ENCODE measurements at regions of chr6 and their contacts with region 1.

Region 1: GRCh38 chr6:90780778-90781177 is 193.9 kb upstream of the MAP3K7 start:
- DNase-seq: no peak
- H3K4me3 ChIP-seq: no peak overlapping the region
- H3K27ac ChIP-seq: no peak overlapping the region
- H3K4me1 ChIP-seq: no peaks in the 10 kb centered on the region
- H3K27me3 ChIP-seq: no peaks in the 10 kb centered on the region
- CTCF ChIP-seq: no peak
- EP300 ChIP-seq: no peak
- POLR2A ChIP-seq: no peak

Region 2: DNA sequence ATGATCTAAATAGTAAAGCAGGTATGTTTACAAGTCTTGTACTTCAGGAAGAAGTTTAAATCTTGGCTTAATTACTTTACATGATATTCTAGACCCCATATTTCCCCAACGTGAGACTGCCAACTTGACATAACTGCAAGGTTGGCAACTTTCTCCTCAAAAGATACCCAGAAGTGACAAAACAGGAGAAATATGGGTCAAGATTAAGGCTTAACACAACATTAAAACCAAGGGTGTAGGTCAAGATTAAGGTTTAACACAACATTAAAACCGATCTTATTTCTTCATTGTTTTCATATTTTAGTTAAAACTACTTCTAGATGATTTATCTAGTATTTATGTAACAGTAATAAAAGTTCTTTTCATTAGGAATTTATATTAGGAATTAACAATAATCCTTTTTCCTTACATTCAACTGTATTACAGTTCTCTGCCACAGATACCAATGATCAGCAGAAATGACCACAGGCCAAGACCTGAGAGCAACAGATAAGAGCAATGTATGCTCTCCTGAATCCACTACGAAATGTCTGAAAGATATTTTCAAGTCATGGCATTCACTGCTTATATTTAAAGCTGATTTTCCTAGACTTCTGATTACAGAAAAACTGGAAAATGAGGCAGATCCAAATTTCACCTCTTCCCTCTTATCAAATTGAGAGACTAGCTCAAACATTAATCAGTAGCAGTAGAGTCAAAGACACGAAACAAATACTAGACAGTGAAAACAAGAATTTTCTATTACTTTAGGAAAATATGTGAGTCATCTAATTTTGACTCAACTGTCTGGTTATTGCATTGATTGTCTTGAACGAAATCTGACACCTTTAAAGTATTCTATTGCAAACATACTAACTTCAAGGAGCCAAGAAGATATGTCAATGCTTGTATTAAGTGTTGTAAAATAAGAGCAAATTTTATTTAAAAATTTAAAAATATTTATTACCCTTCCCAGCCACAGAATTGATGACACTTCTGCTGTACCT is 1889.6 kb before region 1 on chr6:
- in situ Hi-C with region 1: no loop called
- intact Hi-C with region 1: no loop called
- DNase-seq: no peak
- H3K4me3 ChIP-seq: no peak overlapping the region
- H3K27ac ChIP-seq: no peak overlapping the region
- H3K4me1 ChIP-seq: no peaks in the 10 kb centered on the region
- H3K27me3 ChIP-seq: no peaks in the 10 kb centered on the region
- CTCF ChIP-seq: no peak
- EP300 ChIP-seq: no peak
- POLR2A ChIP-seq: no peak

Region 3: DNA sequence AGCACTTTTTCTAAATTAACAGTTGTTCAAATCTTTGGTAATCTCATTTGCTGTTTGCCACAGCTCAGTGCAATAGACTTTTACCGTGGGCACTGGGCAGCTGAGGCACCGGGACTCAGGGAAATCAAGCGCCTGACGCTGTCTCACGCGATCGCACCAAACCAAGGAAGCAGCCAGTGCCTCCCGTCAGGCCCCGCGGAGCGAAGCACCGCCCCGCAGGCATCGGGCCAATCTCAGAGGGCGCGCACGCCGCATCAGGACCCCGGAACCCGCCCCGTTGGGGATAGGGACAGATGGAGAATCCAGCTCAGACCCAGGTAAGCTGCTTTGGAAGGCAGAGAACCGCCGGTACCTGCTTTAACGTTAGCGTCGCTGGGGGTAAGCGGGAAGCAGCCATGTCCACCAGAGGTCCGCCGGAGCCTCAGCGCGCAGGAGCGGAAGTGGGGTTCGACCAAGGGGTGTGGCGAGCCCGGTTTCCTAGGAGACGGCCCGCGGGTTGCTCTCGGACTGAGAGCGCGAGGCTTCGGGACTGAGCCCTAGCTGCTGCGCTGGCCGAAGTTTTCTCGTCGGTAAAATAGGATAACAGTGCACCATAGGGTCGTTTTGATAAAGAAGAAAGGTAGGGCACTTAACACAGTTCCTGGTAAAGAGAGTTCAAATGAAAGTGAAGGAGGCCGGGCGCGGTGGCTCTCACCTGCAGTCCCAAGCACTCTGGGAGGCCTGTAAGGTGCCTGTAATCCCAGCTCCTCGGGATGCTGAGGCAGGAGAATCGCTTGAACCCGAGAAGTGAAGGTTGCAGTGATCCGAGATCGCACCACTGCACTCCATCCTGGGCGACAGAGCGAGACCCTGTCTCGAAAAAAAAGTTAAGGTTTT is 1142.2 kb before region 1 on chr6 and contains the start of gene LYRM2:
- in situ Hi-C with region 1: no loop called
- intact Hi-C with region 1: no loop called
- DNase-seq: peak; percentile 95
- H3K4me3 ChIP-seq: peak within 1 kb of the TSS; percentile 44 to 84 (median 62)
- H3K27ac ChIP-seq: peak within 1 kb of the TSS; percentile 88 to 95 (median 91)
- H3K4me1 ChIP-seq: peaks cover 7 to 33% (median 22%) of the 10 kb centered on the region in 4 donors
- H3K27me3 ChIP-seq: no peaks in the 10 kb centered on the region
- CTCF ChIP-seq: peak in 2 of 5 experiments; percentile 19 to 41
- EP300 ChIP-seq: no peak
- POLR2A ChIP-seq: peak; percentile 96
- total RNA-seq, gene LYRM2: 7.1 to 17.8 (median 16.4) TPM

Region 4: DNA sequence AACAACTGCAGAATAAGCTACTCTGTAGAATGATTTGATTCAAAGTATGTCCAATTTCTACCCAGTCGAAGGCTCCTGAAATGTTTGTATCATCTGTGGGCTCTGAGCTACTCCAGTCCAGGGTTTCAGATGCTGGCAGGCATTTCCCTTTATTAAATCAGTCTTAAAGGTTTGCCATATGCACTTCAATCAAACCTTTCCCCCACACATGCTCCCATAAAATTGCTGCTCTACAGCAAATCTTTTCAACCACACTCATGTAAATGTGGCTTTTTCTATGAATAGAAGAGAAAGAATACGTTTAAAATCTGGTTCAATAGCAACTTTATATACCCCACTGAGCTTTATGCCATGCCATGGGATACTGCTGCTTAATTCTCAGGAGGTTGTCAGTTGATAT is 48.5 kb after region 1 on chr6:
- in situ Hi-C with region 1: no loop called
- intact Hi-C with region 1: loop called (anchors 1 kb)
- DNase-seq: no peak
- H3K4me3 ChIP-seq: no peak overlapping the region
- H3K27ac ChIP-seq: no peak overlapping the region
- H3K4me1 ChIP-seq: no peaks in the 10 kb centered on the region
- H3K27me3 ChIP-seq: no peaks in the 10 kb centered on the region
- CTCF ChIP-seq: no peak
- EP300 ChIP-seq: no peak
- POLR2A ChIP-seq: no peak

Region 5: DNA sequence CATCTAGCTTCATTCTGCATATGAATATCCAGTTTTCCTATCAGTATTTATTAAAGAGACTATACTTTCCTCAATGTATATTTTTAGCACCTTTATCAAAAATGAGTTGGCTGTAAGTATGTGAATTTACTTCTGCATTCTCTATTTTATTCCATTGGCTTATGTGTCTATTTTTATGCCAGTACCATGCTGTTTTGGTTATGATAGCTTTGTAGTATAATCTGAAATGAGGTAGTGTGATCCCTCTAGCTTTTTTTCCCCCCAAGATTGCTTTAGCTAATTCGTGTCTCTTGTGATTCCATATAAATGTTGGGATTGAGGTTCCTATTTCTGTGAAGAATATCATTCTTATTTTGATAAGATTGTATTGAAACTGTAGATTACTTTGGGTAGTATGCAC is 275.2 kb after region 1 on chr6:
- in situ Hi-C with region 1: no loop called
- intact Hi-C with region 1: no loop called
- DNase-seq: no peak
- H3K4me3 ChIP-seq: no peak overlapping the region
- H3K27ac ChIP-seq: no peak overlapping the region
- H3K4me1 ChIP-seq: no peaks in the 10 kb centered on the region
- H3K27me3 ChIP-seq: no peaks in the 10 kb centered on the region
- CTCF ChIP-seq: no peak
- EP300 ChIP-seq: no peak
- POLR2A ChIP-seq: no peak